ENCODE measurements at regions of chr17 and their contacts with region 1.

Region 1: GRCh38 chr17:79991140-79991923 is 44.3 kb downstream of the TBC1D16 start:
- DNase-seq: peak; percentile 87
- ATAC-seq: peak; percentile 84 to 90

Region 2: DNA sequence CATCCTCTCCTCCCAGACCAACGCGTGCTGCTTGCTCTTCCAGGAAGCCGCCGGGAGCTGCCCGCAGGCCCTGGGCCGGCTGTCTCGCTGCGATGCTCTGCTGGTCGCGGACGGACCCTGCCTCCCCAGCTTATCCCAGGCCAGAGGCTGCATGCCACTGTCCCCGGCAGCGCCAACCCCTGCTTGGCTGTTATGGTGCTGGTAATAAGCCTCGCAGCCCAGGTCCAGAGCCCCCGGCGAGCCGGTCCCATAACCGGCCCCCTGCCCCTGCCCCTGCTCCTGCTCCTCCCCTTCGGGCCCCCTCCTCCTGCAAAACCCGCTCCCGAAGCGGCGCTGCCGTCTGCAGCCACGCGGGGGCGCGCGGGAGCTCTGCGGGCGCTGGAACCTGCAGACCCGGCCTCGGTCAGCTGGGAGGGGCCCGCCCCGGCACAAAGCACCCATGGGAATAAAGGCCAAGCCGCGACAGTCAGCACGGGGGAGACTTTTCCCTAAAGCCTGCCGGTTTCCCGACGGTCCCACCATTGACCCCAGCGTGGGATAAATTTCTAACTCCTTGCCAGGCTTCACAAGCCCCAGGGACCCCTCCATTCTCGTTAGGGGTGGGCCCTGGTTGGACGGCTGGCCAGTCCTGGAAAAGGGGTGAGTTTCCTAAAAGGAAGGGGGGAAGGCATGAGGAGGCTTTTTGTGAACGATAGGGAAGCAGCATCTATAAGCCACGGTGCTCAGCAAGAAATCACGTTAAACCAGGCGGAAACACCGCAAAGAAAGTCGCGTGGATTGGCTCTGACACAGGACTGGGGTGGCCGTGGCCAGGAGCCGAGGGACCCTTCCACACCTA is 249.4 kb before region 1 on chr17:
- intact Hi-C with region 1: loop called (anchors 5 to 10 kb)
- DNase-seq: peak; percentile 73
- ATAC-seq: peak; percentile 70 to 75

Region 3: GRCh38 chr17:79749156-79749815 is 242.0 kb before region 1 on chr17:
- intact Hi-C with region 1: loop called (anchors 5 to 10 kb)
- DNase-seq: no peak
- ATAC-seq: no peak

Region 4: DNA sequence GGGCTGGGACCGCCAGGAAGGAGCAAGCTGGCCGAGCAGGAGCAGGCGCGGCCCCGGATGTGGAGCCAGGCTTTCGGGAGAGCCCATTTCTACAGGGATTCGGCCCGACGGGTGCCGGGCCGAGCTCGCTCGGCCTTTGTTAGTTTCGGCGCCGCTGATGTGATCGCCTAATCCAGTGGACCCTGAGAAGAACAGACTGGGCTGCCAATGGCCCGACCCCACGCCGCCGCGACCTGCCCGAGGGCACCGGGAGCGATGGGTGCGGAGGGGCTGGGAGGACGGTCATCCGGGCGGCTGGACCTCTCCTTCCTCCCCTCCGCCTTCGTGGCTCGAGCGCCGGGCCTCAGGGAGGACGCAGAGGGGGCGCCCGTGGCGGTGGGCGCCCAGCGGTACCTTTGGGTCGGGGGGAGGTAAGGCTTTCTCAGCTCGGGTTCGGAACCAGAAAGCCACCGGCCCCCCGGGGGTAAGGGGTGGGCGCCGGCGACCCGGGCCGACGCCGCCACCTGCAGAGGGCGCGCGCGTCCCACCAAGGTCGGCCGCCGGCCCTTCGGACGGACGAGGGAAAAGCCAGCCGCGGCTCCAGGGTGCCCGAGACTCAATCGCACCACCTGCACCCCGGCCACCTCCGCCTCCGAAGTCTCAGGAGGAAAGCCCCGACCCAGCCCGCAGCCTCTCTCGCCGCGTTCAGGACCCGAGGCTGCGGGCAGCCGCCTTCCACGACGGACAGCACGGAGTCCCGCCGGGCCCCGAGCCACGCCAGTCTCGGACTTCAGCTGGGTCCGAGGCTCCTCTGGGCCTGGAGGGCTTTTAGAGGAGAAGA is 201.6 kb before region 1 on chr17:
- intact Hi-C with region 1: loop called (anchors 5 kb)
- DNase-seq: no peak
- ATAC-seq: peak; percentile 61

Region 5: DNA sequence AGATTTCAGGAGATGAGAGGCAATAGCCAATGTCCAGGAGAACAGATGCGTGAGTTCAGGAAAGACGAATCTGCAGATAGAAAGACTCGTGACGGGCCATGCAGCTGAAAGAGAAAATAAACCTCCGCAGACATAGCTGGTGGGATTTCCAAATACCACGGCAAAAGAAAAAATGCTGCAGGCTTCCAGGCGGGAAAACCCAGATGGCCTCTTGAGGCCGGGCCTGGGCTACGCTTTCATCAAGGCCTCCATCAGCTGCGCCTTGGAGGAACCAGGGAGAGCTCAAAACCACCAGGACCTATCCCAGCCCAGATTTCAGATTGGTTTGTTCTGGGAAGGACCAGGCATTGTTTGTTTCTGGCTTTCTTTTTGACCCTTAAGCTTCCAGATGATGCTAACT is 61.8 kb after region 1 on chr17:
- intact Hi-C with region 1: no loop called
- DNase-seq: no peak
- ATAC-seq: no peak

Region 6: DNA sequence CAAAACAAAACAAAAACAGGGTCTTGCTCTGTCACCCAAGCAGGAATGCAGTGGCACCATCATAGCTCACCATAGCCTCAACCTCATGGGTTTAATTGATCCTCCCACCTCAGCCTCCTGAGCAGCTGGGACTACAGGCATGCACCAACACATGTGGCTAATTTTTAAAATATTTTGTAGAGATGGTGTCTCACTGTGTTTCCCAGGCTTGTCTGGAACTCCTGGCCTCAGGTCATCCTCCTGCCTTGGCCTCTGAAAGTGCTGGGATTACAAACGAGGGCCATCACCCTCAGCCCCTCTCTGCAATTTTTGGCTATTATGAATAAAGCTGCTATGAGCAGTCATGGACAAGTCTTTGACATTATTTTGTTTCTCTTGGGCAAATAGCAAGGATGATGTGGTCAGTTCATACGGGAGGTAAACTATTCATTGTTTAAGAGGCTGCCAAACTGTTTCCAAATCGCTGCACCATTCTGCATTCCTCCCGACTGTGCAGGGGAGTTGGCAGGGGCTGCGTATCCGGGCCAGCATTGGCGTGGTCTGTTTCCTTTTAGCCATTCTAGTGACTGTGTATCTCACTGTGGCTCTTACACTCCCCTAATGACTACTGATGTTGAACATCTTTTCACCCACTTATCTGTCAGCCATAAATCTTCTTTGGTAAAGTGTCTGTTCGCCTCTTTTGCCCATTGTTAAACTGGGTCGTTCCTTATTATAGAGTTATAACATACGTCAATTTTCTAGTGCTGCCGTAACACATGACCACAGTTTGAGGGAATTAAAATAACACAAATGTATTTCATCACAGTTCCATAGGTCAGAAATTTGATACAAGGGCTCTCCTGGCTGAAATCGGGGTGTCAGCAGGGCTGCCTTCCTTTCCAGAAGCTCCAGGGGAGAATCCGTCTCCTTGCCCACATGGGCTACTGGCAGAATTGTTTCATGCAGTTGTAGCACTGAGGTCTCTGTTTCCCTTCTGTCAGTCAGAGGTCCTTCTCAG is 134.7 kb after region 1 on chr17:
- intact Hi-C with region 1: no loop called
- DNase-seq: no peak
- ATAC-seq: no peak